A549 (cell line): ENCODE measurements at regions of chr2 and their contacts with region 1.

Region 1: DNA sequence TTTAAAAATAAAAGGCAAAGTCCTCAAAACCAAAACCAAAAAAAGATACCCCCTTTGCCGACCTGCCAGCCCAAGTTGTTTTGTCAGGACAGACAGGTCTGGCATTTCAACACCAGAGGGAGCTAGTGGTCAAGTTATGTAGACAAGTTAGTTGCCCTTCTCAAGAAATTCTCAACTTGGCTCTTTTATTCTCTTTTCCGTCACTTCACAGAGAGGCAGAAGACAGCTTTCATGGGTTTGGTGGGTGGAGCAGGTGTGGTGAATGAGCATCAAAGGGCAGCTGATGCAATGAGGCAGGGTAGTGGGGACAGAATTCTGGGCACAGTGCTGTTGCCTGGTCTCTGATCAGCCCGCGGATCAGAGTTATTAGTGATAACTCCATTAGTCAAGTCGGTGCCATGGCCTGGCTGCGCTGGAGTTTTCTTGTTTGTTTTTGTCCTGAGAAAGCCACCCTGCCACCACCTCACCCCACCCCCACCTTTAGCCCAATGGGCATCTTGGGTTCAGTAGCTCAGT is 303.7 kb upstream of the EPAS1 start:
- DNase-seq: peak; percentile 77 to 94
- ATAC-seq: peak; percentile 50 to 67; a peak in 5 of 6 replicates
- H3K4me3 ChIP-seq: no peak overlapping the region
- H3K27ac ChIP-seq: peak overlapping the region; percentile 84 to 89
- H3K4me1 ChIP-seq: peaks cover 31% of the 10 kb centered on the region
- CTCF ChIP-seq: peak; percentile 97
- EP300 ChIP-seq: no peak
- POLR2A ChIP-seq: no peak
- RAD21 ChIP-seq: peak; percentile 96 to 98

Region 2: DNA sequence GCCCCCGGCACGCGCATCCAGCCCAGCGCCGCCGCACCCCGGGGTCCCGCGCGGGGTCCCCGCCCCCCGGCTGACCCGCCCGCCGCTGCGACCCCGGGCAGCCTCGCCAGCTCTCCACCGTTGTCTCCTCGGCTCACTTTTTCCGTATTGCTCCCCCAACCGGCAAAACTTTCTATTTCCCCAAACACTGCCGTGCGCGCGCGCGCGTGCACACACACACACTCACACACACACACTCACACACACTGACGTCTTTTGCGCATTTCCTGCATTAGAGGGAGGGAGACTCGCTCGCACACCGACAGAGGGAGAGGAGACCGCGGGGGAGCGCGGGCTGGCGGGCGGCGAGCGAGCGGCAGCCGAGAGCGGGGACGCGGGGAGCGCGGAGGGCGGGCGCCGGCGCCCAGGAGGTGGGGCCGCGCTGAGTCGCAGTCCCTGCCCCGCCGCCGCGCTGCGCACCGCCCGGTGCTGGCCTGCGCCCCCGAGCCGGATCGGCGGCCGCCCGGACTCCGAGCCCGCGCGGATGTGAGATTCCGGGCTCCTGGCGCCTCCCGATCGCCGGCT is 342.6 kb before region 1 on chr2:
- CTCF ChIA-PET with region 1: interaction called, 14 read pairs
- POLR2A ChIA-PET with region 1: interaction called, 6 read pairs
- DNase-seq: peak; percentile 72 to 97
- ATAC-seq: peak; percentile 84 to 86
- H3K4me3 ChIP-seq: peak overlapping the region; percentile 83
- H3K27ac ChIP-seq: peak overlapping the region; percentile 86 to 90
- H3K4me1 ChIP-seq: peaks cover 23% of the 10 kb centered on the region
- CTCF ChIP-seq: peak; percentile 58
- EP300 ChIP-seq: peak in 1 of 2 experiments; percentile 18; a peak in 1 of 5 replicates
- POLR2A ChIP-seq: peak; percentile 74
- RAD21 ChIP-seq: peak; percentile 20 to 54; a peak in 3 of 5 replicates

Region 3: GRCh38 chr2:45964226-45964845 is 29.2 kb before region 1 on chr2:
- CTCF ChIA-PET with region 1: interaction called, 21 read pairs
- POLR2A ChIA-PET with region 1: interaction called, 15 read pairs
- DNase-seq: peak; percentile 72 to 94
- ATAC-seq: peak; percentile 82 to 87
- H3K4me3 ChIP-seq: no peak overlapping the region
- H3K27ac ChIP-seq: peak overlapping the region; percentile 70 to 81
- H3K4me1 ChIP-seq: peaks cover 62% of the 10 kb centered on the region
- CTCF ChIP-seq: no peak
- EP300 ChIP-seq: peak; percentile 57 to 78; a peak in 2 of 5 replicates
- POLR2A ChIP-seq: no peak
- RAD21 ChIP-seq: peak; percentile 26 to 44; a peak in 2 of 5 replicates

Region 4: GRCh38 chr2:46062637-46063412 is 69.3 kb after region 1 on chr2:
- CTCF ChIA-PET with region 1: interaction called, 10 read pairs
- POLR2A ChIA-PET with region 1: no interaction called
- DNase-seq: peak; percentile 76 to 86
- ATAC-seq: peak; percentile 58 to 74; a peak in 5 of 6 replicates
- H3K4me3 ChIP-seq: no peak overlapping the region
- H3K27ac ChIP-seq: peak overlapping the region; percentile 65 to 91
- H3K4me1 ChIP-seq: peaks cover 51% of the 10 kb centered on the region
- CTCF ChIP-seq: peak; percentile 95
- EP300 ChIP-seq: no peak
- POLR2A ChIP-seq: no peak
- RAD21 ChIP-seq: peak; percentile 96 to 97

Region 5: GRCh38 chr2:46355756-46356155 is 362.2 kb after region 1 on chr2:
- CTCF ChIA-PET with region 1: interaction called, 13 read pairs
- POLR2A ChIA-PET with region 1: no interaction called
- DNase-seq: no peak
- ATAC-seq: no peak
- H3K4me3 ChIP-seq: no peak overlapping the region
- H3K27ac ChIP-seq: no peak overlapping the region
- H3K4me1 ChIP-seq: no peaks in the 10 kb centered on the region
- CTCF ChIP-seq: no peak
- EP300 ChIP-seq: no peak
- POLR2A ChIP-seq: no peak
- RAD21 ChIP-seq: no peak

Region 6: DNA sequence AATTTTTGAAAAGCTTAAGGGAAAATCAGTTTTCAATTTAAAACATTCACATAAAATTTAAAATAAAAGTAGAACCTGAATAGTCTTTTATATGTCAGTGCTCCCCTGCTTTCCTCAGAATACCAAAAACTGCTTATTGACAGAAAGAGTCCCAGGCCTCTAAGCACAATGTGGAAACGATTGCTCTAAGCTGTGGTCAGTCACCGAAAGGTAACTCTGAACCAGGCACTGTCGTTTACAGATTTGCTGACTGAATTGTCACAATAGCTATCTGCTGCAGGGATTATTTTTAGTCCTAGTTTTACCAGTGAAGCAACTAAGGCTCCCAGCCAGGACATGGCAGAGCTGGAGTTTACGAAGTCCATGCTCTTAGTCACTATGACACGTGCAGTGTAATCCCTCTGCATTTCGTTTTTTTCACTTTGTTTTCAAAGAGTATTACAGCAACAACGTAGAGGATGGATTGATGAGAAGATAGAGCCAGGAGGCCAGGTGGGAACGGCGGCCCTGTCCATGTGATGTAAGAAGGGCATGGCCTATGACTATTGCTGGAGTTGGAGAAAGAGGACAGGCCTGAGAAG is 457.7 kb after region 1 on chr2:
- CTCF ChIA-PET with region 1: interaction called, 10 read pairs
- POLR2A ChIA-PET with region 1: no interaction called
- DNase-seq: no peak
- ATAC-seq: no peak; a peak in 1 of 6 replicates
- H3K4me3 ChIP-seq: no peak overlapping the region
- H3K27ac ChIP-seq: no peak overlapping the region
- H3K4me1 ChIP-seq: 0 out of 3 replicates have a peak, but pooled peaks cover 4% of the 10 kb centered on the region
- CTCF ChIP-seq: no peak
- EP300 ChIP-seq: no peak
- POLR2A ChIP-seq: no peak
- RAD21 ChIP-seq: no peak